Transverse colon (tissue), 4 donors: ENCODE measurements at regions of chr2 and their contacts with region 1.

Region 1: GRCh38 chr2:67234439-67234838 is 162.7 kb upstream of the ETAA1 start:
- DNase-seq: no peak
- H3K4me3 ChIP-seq: no peak overlapping the region
- H3K27ac ChIP-seq: no peak overlapping the region
- H3K4me1 ChIP-seq: no peaks in the 10 kb centered on the region
- H3K27me3 ChIP-seq: no peaks in the 10 kb centered on the region
- CTCF ChIP-seq: peak in 4 of 5 experiments; percentile 12 to 26 (median 19)
- EP300 ChIP-seq: no peak
- POLR2A ChIP-seq: no peak

Region 2: GRCh38 chr2:68000170-68000825 is 765.9 kb after region 1 on chr2:
- in situ Hi-C with region 1: loop called in 1 of 4 experiments (anchors 25 kb)
- intact Hi-C with region 1: no loop called
- DNase-seq: no peak
- H3K4me3 ChIP-seq: no peak overlapping the region
- H3K27ac ChIP-seq: no peak overlapping the region
- H3K4me1 ChIP-seq: no peaks in the 10 kb centered on the region
- H3K27me3 ChIP-seq: no peaks in the 10 kb centered on the region
- CTCF ChIP-seq: no peak
- EP300 ChIP-seq: no peak
- POLR2A ChIP-seq: no peak